Mucosa of descending colon (tissue), 3 donors: ENCODE measurements at regions of chr17 and their contacts with region 1.

Region 1: DNA sequence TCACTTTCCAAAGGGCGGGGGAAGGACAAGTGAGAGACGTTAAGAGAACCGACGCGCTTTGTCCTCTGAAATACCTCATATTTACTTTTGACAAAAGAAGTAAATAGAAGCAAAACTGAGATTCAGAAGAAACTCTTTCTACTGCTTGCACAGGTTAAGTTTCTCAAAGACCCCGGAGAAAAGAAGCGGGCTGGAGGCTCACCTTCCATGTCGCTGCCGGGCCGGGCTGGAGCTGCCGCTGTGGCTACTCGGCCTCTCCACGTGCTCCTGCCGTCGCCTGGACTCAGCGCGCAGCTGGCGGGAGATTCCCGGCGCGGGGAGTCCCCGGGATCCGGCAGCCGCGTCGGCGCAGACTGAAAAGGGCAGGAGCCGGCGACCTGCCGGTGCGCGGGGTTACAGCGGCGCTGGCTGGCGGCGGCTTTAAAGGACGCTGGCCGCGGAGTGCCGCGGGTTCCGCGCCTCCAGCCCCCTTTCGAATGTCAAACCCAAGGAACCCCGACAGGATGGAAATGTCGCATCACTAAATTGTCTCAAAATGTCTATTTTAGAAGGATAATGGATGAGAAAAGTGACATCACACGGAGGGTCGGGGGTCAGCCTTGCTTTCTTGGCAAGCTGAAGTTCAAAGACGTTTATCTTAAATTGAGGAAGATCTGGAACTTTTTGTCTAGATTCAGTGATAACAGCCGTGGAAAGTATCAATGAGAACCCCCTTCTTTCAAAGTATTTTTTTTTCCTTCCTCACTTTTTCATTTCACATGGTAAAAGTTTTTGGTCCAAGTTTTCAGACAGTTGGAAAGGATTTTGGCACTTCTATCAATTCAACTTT is at the start of gene IKZF3:
- DNase-seq: peak; percentile 68 to 87 (median 85)
- ATAC-seq: peak; percentile 91
- H3K4me3 ChIP-seq: no peak within 1 kb of the TSS
- H3K4me1 ChIP-seq: no peaks in the 10 kb centered on the region
- CTCF ChIP-seq: no peak
- total RNA-seq, gene IKZF3: 3.5 to 5.3 (median 4.6) TPM

Region 2: DNA sequence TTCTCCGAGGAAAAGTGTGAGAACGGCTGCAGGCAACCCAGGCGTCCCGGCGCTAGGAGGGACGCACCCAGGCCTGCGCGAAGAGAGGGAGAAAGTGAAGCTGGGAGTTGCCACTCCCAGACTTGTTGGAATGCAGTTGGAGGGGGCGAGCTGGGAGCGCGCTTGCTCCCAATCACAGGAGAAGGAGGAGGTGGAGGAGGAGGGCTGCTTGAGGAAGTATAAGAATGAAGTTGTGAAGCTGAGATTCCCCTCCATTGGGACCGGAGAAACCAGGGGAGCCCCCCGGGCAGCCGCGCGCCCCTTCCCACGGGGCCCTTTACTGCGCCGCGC is 164.3 kb before region 1 on chr17 and contains the start of gene ERBB2:
- intact Hi-C with region 1: no loop called
- DNase-seq: peak; percentile 85 to 87 (median 87)
- ATAC-seq: peak; percentile 82
- H3K4me3 ChIP-seq: peak within 1 kb of the TSS; percentile 92
- H3K4me1 ChIP-seq: peaks cover 35% of the 10 kb centered on the region
- CTCF ChIP-seq: no peak
- total RNA-seq, gene ERBB2: 104 to 284 (median 161) TPM

Region 3: DNA sequence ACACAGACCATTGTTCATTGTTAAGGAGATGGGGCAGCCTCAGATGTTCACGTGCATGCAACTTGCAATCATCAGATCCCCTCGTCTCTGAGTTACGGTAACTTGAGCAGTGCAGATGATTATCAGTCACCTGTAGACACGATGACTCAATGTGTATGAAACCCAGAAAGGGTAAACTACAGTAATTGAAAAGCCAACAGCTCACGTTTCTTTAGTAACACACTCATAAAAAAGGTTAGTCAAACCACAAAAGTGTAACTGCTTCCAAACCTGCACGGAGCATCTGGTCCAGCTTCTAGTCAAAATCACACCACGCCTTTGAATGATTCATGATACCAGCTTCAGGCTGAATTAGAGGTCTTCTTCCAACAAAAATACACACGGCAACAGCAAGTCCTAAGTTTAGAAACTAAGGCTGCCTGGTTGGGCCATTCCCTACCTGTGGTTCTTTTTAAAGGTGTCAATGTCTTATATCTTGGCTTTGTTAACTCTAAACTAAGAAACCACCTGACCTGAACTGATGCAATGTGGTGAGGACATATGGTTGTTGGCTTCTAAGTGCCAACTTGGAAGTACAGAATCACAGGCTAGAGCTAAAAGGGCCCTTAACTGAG is 94.1 kb before region 1 on chr17:
- intact Hi-C with region 1: loop called in 1 of 2 experiments (anchors 10 kb)
- DNase-seq: no peak
- ATAC-seq: peak; percentile 78
- H3K4me3 ChIP-seq: no peak overlapping the region
- H3K4me1 ChIP-seq: no peaks in the 10 kb centered on the region
- CTCF ChIP-seq: no peak

Region 4: DNA sequence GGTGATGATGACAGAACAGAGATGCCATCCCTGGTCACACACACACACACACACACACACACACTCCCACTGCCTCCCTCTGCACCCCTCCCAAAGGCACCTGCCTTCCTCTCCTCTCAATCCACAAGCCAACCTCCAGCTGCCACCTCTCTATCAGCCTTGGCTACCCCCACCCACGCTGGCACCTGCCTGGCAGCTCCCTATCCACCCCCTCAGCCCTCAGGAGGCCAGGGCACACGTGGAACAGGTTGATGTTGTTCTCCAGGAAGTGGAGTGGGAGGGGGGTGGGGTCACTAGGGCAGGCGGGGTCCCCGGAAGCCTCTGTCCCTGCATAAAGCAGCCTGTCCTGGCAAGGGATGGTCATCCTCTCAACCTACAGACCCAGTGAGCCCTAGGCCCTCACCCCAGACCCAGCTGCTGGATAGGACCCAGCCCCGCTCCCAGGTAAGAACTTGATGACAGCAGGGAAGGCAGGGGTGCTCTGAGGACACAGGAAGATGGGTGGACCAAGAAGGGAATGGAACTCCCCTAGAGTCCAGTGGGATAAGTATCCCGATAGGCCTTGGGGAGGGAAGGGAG is 98.6 kb after region 1 on chr17 and contains the start of gene GSDMA:
- intact Hi-C with region 1: no loop called
- DNase-seq: no peak
- ATAC-seq: no peak
- H3K4me3 ChIP-seq: no peak within 1 kb of the TSS
- H3K4me1 ChIP-seq: peaks cover 9% of the 10 kb centered on the region
- CTCF ChIP-seq: no peak
- total RNA-seq, gene GSDMA: 0.22 to 0.54 (median 0.26) TPM